Naive thymus-derived CD4-positive, alpha-beta T cell (primary cell): ENCODE measurements at regions of chr2 and their contacts with region 1.

Region 1: DNA sequence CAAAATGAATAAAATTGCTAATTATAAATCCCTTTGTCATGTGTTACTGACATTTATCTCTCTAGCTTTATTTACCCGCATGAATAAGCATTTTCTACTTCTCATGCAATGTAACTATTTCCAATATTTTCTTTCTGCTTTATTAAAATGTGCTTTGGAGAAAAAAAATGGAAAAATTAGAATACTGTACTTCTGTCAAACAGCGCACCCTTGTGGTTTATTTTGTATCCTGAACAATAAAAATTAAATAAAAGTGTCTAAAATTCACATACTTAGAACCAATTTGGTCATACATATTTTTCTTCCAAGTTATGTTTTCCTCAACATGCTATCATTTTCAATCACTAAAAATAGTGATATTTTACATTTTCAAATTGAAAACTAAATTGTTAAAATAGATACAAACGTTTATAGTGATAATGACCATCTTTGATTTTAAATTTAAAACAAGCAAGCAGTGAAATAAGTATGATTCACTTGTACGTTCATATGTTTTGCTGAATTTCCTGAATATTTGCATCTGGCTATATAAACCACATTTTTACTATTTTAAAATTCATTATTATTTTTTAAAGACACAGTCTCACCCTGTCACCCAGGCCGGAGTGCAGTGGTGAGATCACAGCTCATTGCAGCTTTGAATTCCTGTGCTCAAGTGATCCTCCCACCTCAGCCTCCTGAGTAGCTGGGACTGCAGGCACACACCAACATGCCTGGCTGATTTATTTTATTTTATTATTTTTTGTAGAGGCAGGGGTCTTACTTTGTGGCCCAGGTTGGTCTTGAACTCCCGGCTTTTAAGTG is 95.9 kb upstream of the GRB14 start:
- DNase-seq: no peak
- ATAC-seq: no peak
- H3K4me3 ChIP-seq: no peak overlapping the region
- H3K4me3 Mint-ChIP-seq: no peak overlapping the region
- H3K27ac ChIP-seq: no peak overlapping the region
- H3K27ac Mint-ChIP-seq: no peak overlapping the region
- H3K4me1 ChIP-seq: no peaks in the 10 kb centered on the region
- H3K4me1 Mint-ChIP-seq: no peaks in the 10 kb centered on the region
- H3K27me3 ChIP-seq: no peaks in the 10 kb centered on the region
- H3K27me3 Mint-ChIP-seq: peaks cover 0 to 2% (median 0%) of the 10 kb centered on the region in 5 donors

Region 2: GRCh38 chr2:163155279-163155883 is 1561.8 kb before region 1 on chr2:
- CTCF ChIA-PET with region 1: no interaction called
- POLR2A ChIA-PET with region 1: no interaction called
- intact Hi-C with region 1: loop called in 1 of 2 experiments (anchors 10 kb)
- DNase-seq: no peak
- ATAC-seq: no peak
- H3K4me3 ChIP-seq: no peak overlapping the region
- H3K4me3 Mint-ChIP-seq: no peak overlapping the region
- H3K27ac ChIP-seq: no peak overlapping the region
- H3K27ac Mint-ChIP-seq: no peak overlapping the region
- H3K4me1 ChIP-seq: no peaks in the 10 kb centered on the region
- H3K4me1 Mint-ChIP-seq: no peaks in the 10 kb centered on the region
- H3K27me3 ChIP-seq: no peaks in the 10 kb centered on the region
- H3K27me3 Mint-ChIP-seq: peaks cover 0 to 3% (median 0%) of the 10 kb centered on the region in 5 donors

Region 3: DNA sequence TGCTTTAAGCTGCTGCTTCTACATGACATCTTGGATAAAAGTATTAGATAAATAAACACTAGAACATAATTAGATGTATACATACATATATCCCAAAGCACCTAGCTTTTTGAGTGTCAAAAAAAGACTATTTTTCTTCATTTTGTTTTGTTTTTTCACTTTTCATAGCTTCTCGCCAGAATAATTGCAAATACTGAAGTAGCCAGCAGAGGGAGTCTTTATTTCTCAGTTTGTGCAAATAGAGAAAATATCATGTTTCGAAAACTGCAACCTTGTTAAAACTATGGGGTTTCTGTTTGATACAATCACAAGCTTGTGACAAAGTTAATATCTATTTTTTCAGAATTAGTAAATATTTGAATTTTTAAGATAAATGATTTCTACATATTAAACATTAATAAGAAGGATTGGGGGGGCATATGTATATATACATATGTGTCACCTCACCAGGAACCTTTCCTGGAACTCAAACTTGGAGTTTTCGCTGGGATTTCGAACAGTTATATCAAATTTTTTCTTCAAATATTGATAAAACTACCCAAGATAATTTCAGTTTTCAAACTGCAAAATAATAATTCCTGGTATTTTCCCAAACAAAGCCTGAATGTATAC is 156.9 kb before region 1 on chr2:
- CTCF ChIA-PET with region 1: no interaction called
- POLR2A ChIA-PET with region 1: no interaction called
- intact Hi-C with region 1: loop called in 1 of 2 experiments (anchors 5 kb)
- DNase-seq: no peak
- ATAC-seq: no peak
- H3K4me3 ChIP-seq: no peak overlapping the region
- H3K4me3 Mint-ChIP-seq: no peak overlapping the region
- H3K27ac ChIP-seq: no peak overlapping the region
- H3K27ac Mint-ChIP-seq: no peak overlapping the region
- H3K4me1 ChIP-seq: no peaks in the 10 kb centered on the region
- H3K4me1 Mint-ChIP-seq: no peaks in the 10 kb centered on the region
- H3K27me3 ChIP-seq: no peaks in the 10 kb centered on the region
- H3K27me3 Mint-ChIP-seq: peaks cover 0 to 3% (median 0%) of the 10 kb centered on the region in 5 donors

Region 4: DNA sequence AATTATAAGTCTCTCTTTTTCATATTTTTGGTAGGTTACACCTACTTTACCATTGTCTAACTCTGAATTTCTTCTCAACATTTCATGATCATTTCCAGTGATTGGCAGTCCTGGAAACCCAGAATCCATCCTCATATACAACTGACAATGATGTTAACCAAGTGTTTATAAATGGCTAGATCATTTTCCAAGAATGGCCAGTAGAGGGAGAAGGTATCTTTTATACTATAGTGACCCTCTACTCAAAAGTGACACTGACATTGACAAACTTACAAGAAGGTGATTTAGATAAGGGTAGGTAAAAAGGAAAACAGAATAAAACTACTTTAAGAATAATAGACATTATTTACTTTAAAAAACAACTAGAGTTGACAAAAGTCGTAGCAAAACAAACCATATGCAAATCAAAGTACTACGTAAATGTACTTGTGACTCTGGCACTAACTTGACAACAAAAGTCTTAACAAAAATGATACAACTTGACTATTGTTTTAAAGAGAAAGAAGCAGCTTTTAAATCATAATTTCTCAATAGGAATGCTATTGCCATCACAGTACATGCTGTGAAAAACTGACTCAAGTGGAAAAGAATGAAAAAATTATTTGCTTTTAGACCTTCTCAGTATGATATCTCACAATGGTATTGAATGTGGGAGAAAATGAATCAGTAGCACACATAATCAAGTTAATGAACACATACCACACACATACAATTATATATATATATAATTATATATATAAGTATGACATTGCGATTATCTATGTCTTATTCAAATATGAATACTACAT is 19.3 kb before region 1 on chr2:
- CTCF ChIA-PET with region 1: no interaction called
- POLR2A ChIA-PET with region 1: no interaction called
- intact Hi-C with region 1: no loop called
- DNase-seq: no peak
- ATAC-seq: no peak
- H3K4me3 ChIP-seq: no peak overlapping the region
- H3K4me3 Mint-ChIP-seq: no peak overlapping the region
- H3K27ac ChIP-seq: no peak overlapping the region
- H3K27ac Mint-ChIP-seq: no peak overlapping the region
- H3K4me1 ChIP-seq: no peaks in the 10 kb centered on the region
- H3K4me1 Mint-ChIP-seq: no peaks in the 10 kb centered on the region
- H3K27me3 ChIP-seq: no peaks in the 10 kb centered on the region
- H3K27me3 Mint-ChIP-seq: no peaks in the 10 kb centered on the region